Posterior vena cava (tissue), 2 donors: ENCODE measurements at regions of chr12 and their contacts with region 1.

Region 1: GRCh38 chr12:5442251-5443006 is 10.5 kb downstream of the NTF3 start:
- DNase-seq: no peak

Region 2: DNA sequence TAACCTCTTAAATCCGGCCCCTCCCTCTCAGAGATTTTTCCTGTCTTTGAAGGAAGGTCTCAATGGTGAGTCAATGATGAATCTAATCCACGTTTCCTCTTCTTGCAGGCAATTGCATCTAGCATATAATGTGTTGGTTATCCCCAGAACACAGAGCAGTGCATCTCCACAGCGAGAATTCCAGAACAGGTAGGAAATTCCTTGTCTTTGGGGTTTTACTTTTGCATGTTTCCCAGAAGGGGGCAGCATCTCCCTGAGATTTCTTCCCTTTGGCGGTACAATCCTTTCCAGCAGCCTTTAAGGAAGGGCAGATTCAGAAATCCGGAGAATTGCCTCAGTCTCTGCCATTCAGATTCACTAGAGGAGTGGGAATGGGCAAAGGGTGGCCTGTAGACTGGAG is 270.7 kb before region 1 on chr12:
- intact Hi-C with region 1: loop called in 1 of 2 experiments (anchors 10 kb)
- DNase-seq: no peak

Region 3: DNA sequence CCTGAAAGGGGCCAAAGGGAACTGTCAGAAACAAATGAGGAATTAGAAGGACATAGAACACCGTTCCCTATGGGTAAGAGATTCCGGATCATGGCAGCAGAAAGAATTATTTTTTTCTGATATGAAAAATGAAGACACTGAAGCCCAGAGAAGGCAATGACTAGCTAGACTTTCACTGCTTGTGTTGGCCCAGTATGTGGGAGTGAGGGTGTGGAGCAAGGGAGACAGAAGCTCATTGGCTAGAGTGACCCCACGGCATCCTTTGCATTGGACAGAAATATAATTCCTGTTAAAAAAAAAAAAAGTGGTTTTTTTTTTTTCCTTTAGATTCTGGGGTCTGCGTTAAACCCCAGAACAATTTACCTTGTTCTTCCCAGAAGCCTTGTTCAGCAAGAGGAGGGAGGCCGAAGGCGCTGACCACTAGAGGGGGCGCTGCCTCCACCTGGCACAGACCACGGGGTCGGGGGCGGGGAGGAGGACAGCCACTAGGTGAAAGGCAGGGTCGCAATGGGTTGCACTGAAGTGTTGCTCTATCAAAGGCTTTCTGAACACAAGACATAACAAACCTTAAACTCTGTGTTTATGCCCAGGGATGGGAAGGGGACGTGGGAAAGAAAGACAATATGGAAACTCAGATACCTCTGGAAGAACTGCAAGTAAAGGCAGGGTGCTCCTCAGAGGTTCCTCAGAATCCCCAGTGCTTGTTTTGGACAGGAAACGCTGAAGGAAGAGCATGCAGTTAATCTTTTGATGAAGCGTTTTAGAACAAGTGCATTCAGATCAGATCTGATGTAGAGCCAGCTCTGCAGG is 241.9 kb before region 1 on chr12:
- intact Hi-C with region 1: loop called in 1 of 2 experiments (anchors 5 kb)
- DNase-seq: no peak

Region 4: GRCh38 chr12:5499566-5500330 is 57.3 kb after region 1 on chr12:
- intact Hi-C with region 1: loop called in 1 of 2 experiments (anchors 2 kb)
- DNase-seq: no peak